ENCODE measurements at regions of chr15 and their contacts with region 1.

Region 1: GRCh38 chr15:90233376-90234095 is at the start of gene CIB1:
- DNase-seq: peak; percentile 95
- ATAC-seq: peak; percentile 90
- H3K4me3 Mint-ChIP-seq: peak within 1 kb of the TSS; percentile 72
- H3K27ac Mint-ChIP-seq: peak within 1 kb of the TSS; percentile 25
- H3K4me1 Mint-ChIP-seq: peaks cover 16% of the 10 kb centered on the region
- H3K27me3 Mint-ChIP-seq: no peaks in the 10 kb centered on the region
- CTCF ChIP-seq: no peak
- total RNA-seq, gene CIB1: 26.1 to 29.6 TPM (median 26.9 TPM) in 3 replicates

Region 2: DNA sequence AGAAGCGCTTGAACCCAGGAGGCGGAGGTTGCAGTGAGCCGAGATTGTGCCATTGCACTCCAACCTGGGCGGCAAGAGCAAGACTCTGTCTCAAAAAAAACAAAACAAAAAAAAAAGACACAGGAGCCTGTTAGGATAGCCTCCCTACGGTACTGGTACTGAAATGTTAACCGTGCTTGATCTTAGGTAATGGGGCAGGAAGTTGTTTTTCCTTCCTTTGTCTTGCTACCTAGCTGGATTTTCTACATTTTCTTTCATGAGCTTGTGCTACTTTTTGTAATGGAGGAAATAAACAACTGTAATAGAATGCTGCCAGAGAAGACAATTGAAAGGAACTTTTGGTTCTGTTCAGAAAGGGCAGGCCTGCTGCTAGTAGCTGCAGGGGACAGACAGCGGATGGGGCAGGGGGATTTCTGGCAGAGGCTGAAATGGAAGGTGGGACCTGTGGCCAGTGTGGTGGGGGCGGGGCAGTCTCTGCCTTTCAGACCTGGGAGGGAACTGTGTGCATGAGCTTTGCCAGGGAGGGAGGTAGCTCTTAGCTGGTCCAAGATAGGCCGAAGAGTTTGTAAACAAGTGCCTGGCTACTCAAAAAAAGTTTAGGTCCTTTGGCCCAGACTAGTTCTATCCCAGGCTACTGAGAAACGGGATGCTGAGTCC is 81.4 kb before region 1 on chr15:
- CTCF ChIA-PET with region 1: interaction called, 25 read pairs
- POLR2A ChIA-PET with region 1: no interaction called
- DNase-seq: peak; percentile 70
- ATAC-seq: peak; percentile 94
- H3K4me3 Mint-ChIP-seq: peak overlapping the region; percentile 10
- H3K27ac Mint-ChIP-seq: peak overlapping the region; percentile 97
- H3K4me1 Mint-ChIP-seq: peaks cover 42% of the 10 kb centered on the region
- H3K27me3 Mint-ChIP-seq: peaks cover 13% of the 10 kb centered on the region
- CTCF ChIP-seq: no peak

Region 3: GRCh38 chr15:90201130-90201949 is 32.2 kb before region 1 on chr15 and contains the start of gene SEMA4B:
- CTCF ChIA-PET with region 1: interaction called, 22 read pairs
- POLR2A ChIA-PET with region 1: interaction called, 7 read pairs
- DNase-seq: peak; percentile 83
- ATAC-seq: peak; percentile 86
- H3K4me3 Mint-ChIP-seq: peak within 1 kb of the TSS; percentile 78
- H3K27ac Mint-ChIP-seq: peak within 1 kb of the TSS; percentile 60
- H3K4me1 Mint-ChIP-seq: peaks cover 20% of the 10 kb centered on the region
- H3K27me3 Mint-ChIP-seq: no peaks in the 10 kb centered on the region; the same call in 1 of the 2 replicates
- CTCF ChIP-seq: no peak
- total RNA-seq, gene SEMA4B: 50.1 to 53.3 TPM (median 50.2 TPM) in 3 replicates

Region 4: DNA sequence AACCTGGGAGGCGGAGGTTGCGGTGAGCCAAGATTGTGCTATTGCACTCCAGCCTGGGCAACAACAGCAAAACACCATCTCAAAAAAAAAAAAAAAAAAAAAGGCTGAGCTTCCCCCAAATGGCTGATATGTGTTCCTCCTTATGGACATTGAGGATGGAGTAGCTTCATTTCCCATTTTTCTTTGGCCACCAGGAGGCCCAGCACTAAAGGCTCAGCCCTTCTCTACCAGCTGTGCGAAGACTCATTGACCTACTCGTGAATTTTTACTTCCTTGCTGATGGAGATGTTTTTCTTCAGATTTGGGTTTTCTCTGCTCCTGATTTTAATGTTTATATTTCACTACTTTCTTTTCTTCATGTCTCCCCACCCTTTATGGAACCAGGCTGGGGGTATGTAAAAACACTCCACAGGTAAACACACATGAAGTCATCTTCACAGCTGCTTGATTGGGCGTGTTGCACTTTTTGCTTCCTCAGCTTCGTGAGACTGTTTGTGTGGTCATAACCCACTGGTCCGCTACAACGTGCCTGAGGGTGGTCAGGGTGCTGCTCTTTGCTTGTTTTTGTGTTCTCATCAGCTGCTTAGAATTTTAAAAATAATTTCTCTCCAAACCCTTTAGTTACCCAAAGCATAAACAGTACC is 18.9 kb before region 1 on chr15:
- CTCF ChIA-PET with region 1: interaction called, 20 read pairs
- POLR2A ChIA-PET with region 1: no interaction called
- DNase-seq: no peak
- ATAC-seq: peak; percentile 43; the same call in 1 of the 2 replicates
- H3K4me3 Mint-ChIP-seq: no peak overlapping the region
- H3K27ac Mint-ChIP-seq: no peak overlapping the region
- H3K4me1 Mint-ChIP-seq: peaks cover 12% of the 10 kb centered on the region
- H3K27me3 Mint-ChIP-seq: no peaks in the 10 kb centered on the region
- CTCF ChIP-seq: no peak

Region 5: DNA sequence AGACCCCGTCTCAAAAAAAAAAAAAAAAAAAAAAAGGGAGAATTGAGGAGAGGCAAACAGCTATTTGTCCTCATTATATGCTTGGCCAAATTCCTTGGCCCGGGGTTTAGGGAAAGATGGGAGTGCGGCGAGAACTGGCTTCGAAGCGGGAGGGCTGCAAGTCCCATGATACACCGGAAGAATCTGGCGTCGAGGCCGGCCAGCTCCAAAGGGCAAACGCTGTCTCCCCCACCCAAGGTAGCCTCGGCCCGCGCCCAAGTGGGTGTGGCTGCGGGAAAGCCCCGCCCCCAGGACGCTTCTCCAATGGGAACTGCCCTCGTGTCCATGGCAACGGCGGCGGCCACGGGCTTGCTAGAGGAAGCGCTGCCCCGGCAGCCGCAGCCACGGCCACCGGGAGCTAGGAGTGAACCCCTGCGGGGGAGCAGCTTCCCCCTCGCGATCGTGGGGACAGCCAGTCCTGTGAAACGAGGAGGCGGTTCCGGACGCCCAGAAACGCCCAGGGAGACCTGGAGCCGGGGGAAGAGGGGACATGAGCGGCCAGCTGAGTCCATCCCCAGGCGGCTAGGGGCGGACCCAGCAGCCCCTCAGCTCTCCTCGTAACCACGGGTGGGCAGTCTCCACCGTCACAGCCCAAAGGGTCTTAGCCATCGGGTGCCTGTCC is 15.8 kb after region 1 on chr15 and contains the start of gene TTLL13:
- CTCF ChIA-PET with region 1: interaction called, 31 read pairs
- POLR2A ChIA-PET with region 1: interaction called, 11 read pairs
- DNase-seq: peak; percentile 82
- ATAC-seq: peak; percentile 95
- H3K4me3 Mint-ChIP-seq: peak within 1 kb of the TSS; percentile 72
- H3K27ac Mint-ChIP-seq: no peak within 1 kb of the TSS; the same call in 1 of the 2 replicates
- H3K4me1 Mint-ChIP-seq: peaks cover 8% of the 10 kb centered on the region; the same call in 1 of the 2 replicates
- H3K27me3 Mint-ChIP-seq: peaks cover 16% of the 10 kb centered on the region
- CTCF ChIP-seq: no peak
- total RNA-seq, gene TTLL13: 0.18 to 0.76 TPM (median 0.48 TPM) in 3 replicates

Region 6: GRCh38 chr15:90265271-90266060 is 31.9 kb after region 1 on chr15 and contains the start of gene NGRN:
- CTCF ChIA-PET with region 1: interaction called, 10 read pairs
- POLR2A ChIA-PET with region 1: interaction called, 6 read pairs
- DNase-seq: peak; percentile 87
- ATAC-seq: peak; percentile 85
- H3K4me3 Mint-ChIP-seq: peak within 1 kb of the TSS; percentile 95
- H3K27ac Mint-ChIP-seq: peak within 1 kb of the TSS; percentile 97
- H3K4me1 Mint-ChIP-seq: peaks cover 40% of the 10 kb centered on the region
- H3K27me3 Mint-ChIP-seq: no peaks in the 10 kb centered on the region
- CTCF ChIP-seq: no peak
- total RNA-seq, gene NGRN: 77.8 to 88.5 TPM (median 88.1 TPM) in 3 replicates

Region 7: GRCh38 chr15:90291679-90292356 is 58.3 kb after region 1 on chr15:
- CTCF ChIA-PET with region 1: interaction called, 17 read pairs
- POLR2A ChIA-PET with region 1: no interaction called
- DNase-seq: peak; percentile 41
- ATAC-seq: no peak
- H3K4me3 Mint-ChIP-seq: no peak overlapping the region
- H3K27ac Mint-ChIP-seq: no peak overlapping the region
- H3K4me1 Mint-ChIP-seq: peaks cover 35% of the 10 kb centered on the region
- H3K27me3 Mint-ChIP-seq: no peaks in the 10 kb centered on the region
- CTCF ChIP-seq: no peak

Region 8: DNA sequence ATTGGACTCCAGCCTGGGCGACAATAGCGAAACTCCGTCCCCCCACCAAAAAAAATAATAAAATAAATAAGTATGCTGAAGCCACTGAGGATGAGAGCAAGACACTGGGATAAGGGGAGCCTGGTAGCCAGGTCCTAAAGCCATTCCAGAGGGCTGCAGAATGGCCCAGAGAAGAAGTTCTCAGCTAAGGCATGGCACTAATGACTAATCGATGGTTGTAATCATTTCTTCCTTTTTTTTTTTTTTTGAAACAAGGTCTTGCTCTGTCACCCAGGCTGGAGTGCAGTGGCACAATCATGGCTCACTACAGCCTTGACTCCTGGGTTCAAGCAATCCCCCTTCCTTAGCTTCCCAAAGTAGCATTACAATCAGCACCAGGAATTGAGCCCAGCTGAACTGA is 92.9 kb after region 1 on chr15:
- CTCF ChIA-PET with region 1: no interaction called
- POLR2A ChIA-PET with region 1: no interaction called
- DNase-seq: no peak
- ATAC-seq: no peak
- H3K4me3 Mint-ChIP-seq: no peak overlapping the region
- H3K27ac Mint-ChIP-seq: no peak overlapping the region
- H3K4me1 Mint-ChIP-seq: no peaks in the 10 kb centered on the region
- H3K27me3 Mint-ChIP-seq: no peaks in the 10 kb centered on the region
- CTCF ChIP-seq: no peak

Measured in WTC11 (cell line).